MCF 10A (cell line): ENCODE measurements at regions of chr9 and their contacts with region 1.

Region 1: DNA sequence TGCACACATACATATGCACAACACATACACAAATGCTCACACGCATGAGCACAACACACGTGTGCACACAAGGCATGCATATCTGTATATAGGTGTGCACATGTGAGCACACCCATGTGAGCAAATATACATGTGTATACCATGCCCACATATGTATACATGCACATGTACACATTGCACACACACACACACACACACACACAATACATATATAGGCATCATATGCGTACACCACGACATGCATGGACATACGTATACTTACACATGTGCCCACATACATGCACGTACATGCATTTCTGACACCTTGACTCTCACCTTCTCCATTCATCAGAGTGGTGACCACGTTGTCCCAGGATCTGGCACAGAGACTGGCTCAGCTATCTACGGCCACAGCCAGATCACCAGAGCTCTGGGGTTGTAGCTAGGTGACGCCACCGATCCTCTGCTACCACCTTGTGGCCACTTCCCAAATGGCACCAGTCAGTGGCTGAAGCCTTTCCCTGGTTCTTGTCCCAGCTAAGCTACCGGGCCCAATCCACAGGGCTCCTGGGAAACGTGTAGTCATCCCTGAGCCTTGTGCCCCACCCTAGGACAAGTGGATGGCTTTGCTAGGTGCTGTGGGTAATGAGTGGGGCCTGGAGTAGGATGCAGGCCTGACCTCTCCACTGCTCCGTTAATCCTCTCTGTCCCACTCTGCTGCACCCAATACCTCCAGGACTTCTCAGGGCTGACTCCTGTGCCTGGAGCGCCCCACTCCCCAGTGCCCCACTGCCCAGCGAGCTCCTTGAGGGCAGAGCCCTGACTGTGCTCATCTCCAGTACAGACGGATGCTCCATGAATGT is 194.4 kb downstream of the RGS3 start:
- DNase-seq: peak; percentile 82
- H3K4me3 Mint-ChIP-seq: no peak overlapping the region
- H3K27ac Mint-ChIP-seq: no peak overlapping the region
- H3K4me1 Mint-ChIP-seq: no peaks in the 10 kb centered on the region
- H3K27me3 Mint-ChIP-seq: peaks cover 30% of the 10 kb centered on the region
- CTCF ChIP-seq: peak; percentile 97

Region 2: DNA sequence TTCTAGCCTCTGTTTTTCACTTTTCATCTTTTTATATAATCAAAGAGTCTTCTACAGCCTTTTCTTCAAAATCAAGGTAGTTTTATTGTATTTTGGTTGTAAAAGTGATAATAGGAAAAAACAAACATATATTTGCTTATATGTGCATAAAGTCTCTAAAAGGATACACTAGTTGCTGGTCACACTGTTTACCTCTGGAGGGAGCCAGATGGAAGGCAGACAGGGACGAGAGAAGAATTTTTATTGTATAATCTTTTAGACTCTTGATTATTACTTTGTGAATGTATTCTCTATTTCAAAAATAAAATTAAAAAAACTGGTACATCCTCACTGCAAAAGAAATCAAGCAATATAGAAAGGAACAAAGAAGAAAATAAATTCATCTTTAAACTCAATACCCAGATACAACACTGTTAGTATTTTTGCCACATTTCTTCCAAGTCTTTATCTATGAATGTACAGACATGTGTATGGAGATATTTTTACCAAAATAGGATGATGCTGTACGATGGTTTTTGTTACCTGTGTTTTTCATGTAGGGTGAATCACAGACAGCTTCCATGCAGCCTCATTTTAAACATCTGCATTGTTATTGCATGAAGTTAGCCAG is 348.6 kb before region 1 on chr9:
- CTCF ChIA-PET with region 1: interaction called, 6 read pairs
- POLR2A ChIA-PET with region 1: no interaction called
- intact Hi-C with region 1: loop called (anchors 1 kb)
- DNase-seq: peak; percentile 64
- H3K4me3 Mint-ChIP-seq: no peak overlapping the region
- H3K27ac Mint-ChIP-seq: no peak overlapping the region
- H3K4me1 Mint-ChIP-seq: no peaks in the 10 kb centered on the region
- H3K27me3 Mint-ChIP-seq: no peaks in the 10 kb centered on the region
- CTCF ChIP-seq: peak; percentile 58

Region 3: DNA sequence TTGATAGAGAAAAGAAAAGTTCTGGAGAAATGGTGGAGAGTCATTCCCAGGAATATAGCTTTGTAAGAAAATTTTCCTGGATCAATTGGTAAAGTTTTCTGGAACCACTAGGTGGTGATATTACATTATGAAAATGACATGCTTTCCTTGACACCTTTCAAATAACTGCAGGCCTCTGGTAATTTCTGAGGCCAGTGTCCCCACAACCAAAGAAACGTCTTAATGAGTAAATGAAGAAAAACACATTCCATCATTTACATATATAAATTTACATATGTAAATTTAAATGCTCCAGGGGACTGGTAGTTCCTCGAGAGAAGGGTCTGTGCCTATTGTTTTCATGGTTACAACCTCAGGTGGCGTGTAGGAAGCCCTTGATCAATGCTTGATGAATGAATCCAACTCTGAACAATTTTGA is 211.6 kb before region 1 on chr9:
- CTCF ChIA-PET with region 1: interaction called, 317 read pairs
- POLR2A ChIA-PET with region 1: interaction called, 15 read pairs
- intact Hi-C with region 1: loop called (anchors 1 kb)
- DNase-seq: peak; percentile 51
- H3K4me3 Mint-ChIP-seq: no peak overlapping the region
- H3K27ac Mint-ChIP-seq: no peak overlapping the region
- H3K4me1 Mint-ChIP-seq: no peaks in the 10 kb centered on the region
- H3K27me3 Mint-ChIP-seq: no peaks in the 10 kb centered on the region
- CTCF ChIP-seq: peak; percentile 66

Region 4: GRCh38 chr9:113564498-113565237 is 93.3 kb before region 1 on chr9:
- CTCF ChIA-PET with region 1: interaction called, 19 read pairs
- POLR2A ChIA-PET with region 1: interaction called, 4 read pairs
- intact Hi-C with region 1: no loop called
- DNase-seq: peak; percentile 84
- H3K4me3 Mint-ChIP-seq: peak overlapping the region; percentile 73
- H3K27ac Mint-ChIP-seq: peak overlapping the region; percentile 75
- H3K4me1 Mint-ChIP-seq: peaks cover 24% of the 10 kb centered on the region
- H3K27me3 Mint-ChIP-seq: no peaks in the 10 kb centered on the region
- CTCF ChIP-seq: no peak

Region 5: DNA sequence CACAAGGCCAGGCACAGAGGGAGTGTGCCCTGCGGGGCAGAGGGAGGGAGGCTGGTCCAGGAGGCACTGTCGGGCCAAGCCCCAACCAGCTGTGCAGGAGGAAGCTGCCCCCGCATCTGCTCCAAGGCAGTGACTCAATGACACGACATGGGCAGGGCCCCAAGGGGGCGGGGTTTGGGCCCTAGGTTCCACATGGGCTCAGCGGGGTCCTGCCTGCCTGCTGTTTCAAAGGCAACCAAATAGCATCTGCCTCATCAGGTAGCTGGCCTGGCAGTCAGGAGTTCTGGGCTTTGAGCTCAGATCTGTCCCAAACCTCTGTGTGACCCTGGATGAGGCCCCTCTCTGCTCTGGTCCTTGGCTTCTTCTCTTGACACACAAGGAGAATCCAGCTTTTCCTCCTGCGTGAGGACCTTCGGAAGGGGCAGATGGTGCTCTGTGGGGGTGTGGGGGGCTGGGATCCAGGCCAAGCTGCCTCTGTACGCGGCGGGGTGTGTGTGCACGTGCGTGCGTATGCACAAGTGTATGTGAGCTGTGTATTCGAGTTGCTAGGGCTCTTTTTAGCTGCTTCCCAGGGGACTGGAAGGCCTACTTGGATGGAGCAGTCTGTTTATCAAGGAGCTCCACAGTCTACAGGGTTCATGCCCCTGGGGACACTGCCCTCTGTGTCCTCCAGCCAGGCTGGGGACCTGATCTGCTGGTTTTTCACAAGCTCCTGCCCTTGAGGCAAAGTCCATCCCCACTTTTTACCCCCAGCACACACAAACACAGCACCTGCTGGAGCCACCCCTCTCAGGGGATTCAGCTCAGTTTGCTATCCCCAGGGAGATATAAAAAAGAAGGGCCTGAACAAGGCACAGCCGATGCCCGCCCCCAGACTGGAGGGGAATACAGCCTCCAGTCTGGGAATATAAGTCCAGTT is 55.5 kb before region 1 on chr9:
- CTCF ChIA-PET with region 1: interaction called, 81 read pairs
- POLR2A ChIA-PET with region 1: no interaction called
- intact Hi-C with region 1: no loop called
- DNase-seq: peak; percentile 88
- H3K4me3 Mint-ChIP-seq: no peak overlapping the region
- H3K27ac Mint-ChIP-seq: peak overlapping the region; percentile 16
- H3K4me1 Mint-ChIP-seq: peaks cover 16% of the 10 kb centered on the region
- H3K27me3 Mint-ChIP-seq: no peaks in the 10 kb centered on the region
- CTCF ChIP-seq: no peak

Region 6: DNA sequence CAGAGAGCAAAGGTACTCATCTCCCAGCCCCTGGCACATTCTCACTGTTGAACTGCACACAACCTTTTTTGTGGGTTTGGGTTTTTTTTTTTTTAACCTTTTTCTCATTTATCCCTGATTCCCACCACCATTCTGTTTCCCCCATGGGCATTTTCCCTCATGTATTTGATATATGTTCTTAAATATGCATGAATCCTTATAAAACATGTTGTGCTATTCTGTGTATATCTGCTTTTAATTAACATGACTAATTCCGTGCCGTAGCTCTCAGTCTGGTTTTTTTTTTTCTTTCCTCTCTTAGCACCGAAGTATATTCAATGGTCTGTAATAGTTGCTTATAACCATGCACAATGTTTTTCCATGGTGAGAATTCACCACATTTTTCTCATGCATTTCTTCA is 10.1 kb after region 1 on chr9:
- CTCF ChIA-PET with region 1: interaction called, 50 read pairs
- POLR2A ChIA-PET with region 1: no interaction called
- intact Hi-C with region 1: no loop called
- DNase-seq: no peak
- H3K4me3 Mint-ChIP-seq: no peak overlapping the region
- H3K27ac Mint-ChIP-seq: no peak overlapping the region
- H3K4me1 Mint-ChIP-seq: no peaks in the 10 kb centered on the region
- H3K27me3 Mint-ChIP-seq: peaks cover 35% of the 10 kb centered on the region
- CTCF ChIP-seq: no peak